ENCODE measurements at regions of chr2 and their contacts with region 1.

Region 1: GRCh38 chr2:28870146-28870891 is at the start of gene TRMT61B:
- DNase-seq: peak; percentile 97
- H3K4me3 Mint-ChIP-seq: peak within 1 kb of the TSS; percentile 89
- H3K27ac Mint-ChIP-seq: peak within 1 kb of the TSS; percentile 89
- H3K4me1 Mint-ChIP-seq: peaks cover 31% of the 10 kb centered on the region
- H3K27me3 Mint-ChIP-seq: no peaks in the 10 kb centered on the region
- total RNA-seq, gene TRMT61B: 13.6 to 15.5 TPM

Region 2: DNA sequence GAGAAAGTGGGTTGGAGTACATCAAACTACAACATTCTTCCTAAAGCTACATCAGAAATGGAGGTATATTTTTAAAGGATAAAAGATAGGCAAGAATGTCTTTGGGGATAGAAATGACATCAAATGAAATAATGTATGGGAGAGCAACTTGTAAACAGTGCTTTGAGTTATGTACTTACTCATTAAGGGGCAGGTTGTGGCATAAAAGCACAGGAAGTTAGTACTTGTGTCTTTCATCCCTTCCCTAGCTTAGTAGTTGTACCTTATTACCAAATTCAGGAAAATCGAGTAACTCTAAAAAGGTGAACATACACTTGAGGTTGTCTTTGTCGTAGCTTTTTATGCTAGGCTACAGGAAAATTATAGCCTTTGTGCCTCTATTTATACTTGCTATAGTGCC is 89.8 kb before region 1 on chr2:
- CTCF ChIA-PET with region 1: no interaction called
- intact Hi-C with region 1: no loop called
- DNase-seq: no peak
- H3K4me3 Mint-ChIP-seq: no peak overlapping the region
- H3K27ac Mint-ChIP-seq: peak overlapping the region; percentile 59
- H3K4me1 Mint-ChIP-seq: peaks cover 26% of the 10 kb centered on the region
- H3K27me3 Mint-ChIP-seq: no peaks in the 10 kb centered on the region

Region 3: DNA sequence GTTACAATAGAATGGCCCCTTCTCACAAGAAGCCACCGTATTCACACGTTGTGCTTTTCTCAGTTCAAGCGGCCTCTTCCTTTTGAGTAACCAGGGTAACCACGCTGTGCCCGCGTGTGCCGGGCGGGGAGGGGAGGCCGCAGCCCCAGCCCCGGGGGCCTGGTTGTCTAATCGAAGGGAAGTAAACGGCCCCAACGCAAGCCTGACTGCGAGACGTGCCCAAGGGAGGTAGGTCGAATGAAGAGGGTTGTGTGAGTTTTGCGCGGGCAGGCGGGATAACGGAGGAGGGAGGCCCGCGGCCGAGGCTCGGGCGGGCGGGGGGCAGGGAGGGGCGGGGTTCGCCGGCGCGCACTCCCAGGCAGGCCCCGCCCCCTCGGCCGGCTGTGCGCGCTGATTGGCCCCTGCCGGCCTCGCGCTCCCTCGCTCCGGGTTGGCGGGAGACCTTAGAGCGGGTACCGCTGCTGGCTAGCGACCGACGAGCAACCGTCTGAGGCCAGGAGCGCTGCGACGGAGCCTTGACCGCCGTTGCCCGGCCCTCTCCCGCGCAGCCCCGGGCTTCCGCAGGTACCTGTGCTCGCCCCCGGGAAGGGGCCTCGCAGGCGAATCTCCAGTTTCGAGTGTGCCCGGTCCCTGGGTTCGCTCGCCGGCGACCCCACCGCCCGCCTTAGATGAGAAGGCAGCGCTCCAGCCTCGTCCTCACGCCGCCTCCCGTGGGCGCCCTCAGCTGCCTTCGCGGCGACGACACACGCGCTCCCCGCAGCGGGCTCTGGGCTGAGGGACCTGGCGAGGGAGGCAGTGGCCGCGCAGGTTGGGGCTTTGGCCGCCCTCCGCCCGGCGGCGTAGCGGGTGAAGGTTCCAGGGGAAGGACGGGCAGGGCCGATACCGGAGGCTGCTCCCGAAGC is 59.7 kb before region 1 on chr2 and contains the start of gene SPDYA:
- CTCF ChIA-PET with region 1: no interaction called
- intact Hi-C with region 1: loop called (anchors 1 kb)
- DNase-seq: peak; percentile 82
- H3K4me3 Mint-ChIP-seq: peak within 1 kb of the TSS; percentile 75
- H3K27ac Mint-ChIP-seq: no peak within 1 kb of the TSS
- H3K4me1 Mint-ChIP-seq: peaks cover 11% of the 10 kb centered on the region
- H3K27me3 Mint-ChIP-seq: no peaks in the 10 kb centered on the region
- total RNA-seq, gene SPDYA: 1.8 to 2.0 TPM

Region 4: DNA sequence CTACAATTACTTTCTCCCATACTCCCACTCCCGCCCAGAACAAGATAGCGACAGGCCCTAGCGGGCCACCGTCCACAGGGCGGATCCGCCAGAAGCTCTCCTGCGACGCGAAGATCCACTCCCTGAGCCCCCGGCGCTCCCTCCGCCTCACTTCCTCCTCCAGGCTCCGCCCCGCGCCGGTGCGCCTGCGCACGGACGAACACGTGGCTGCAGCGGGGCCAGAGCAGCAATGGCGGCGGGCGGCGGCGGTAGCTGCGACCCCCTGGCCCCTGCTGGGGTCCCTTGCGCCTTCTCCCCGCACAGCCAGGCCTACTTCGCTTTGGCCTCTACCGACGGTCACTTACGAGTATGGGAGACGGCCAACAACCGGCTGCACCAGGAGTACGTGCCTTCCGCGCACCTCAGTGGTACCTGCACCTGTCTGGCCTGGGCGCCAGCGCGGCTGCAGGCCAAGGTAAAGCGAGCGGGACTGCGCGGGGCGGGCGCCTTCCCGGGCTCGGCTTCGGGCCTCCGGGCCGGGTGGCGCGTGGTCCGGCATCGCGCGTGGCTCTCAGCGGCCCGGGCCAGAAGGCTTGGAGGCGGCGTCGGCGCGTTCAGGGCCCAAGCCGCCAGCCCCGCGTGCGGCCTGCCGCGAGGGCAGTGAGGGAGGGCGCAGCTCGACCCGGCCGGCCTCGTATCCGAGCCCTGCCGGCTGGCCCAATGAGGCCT is 24.3 kb after region 1 on chr2 and contains the start of gene WDR43:
- CTCF ChIA-PET with region 1: interaction called, 6 read pairs
- intact Hi-C with region 1: loop called (anchors 1 kb)
- DNase-seq: peak; percentile 97
- H3K4me3 Mint-ChIP-seq: peak within 1 kb of the TSS; percentile 100
- H3K27ac Mint-ChIP-seq: peak within 1 kb of the TSS; percentile 97
- H3K4me1 Mint-ChIP-seq: peaks cover 34% of the 10 kb centered on the region
- H3K27me3 Mint-ChIP-seq: no peaks in the 10 kb centered on the region
- total RNA-seq, gene WDR43: 76.5 to 78.7 TPM

Region 5: DNA sequence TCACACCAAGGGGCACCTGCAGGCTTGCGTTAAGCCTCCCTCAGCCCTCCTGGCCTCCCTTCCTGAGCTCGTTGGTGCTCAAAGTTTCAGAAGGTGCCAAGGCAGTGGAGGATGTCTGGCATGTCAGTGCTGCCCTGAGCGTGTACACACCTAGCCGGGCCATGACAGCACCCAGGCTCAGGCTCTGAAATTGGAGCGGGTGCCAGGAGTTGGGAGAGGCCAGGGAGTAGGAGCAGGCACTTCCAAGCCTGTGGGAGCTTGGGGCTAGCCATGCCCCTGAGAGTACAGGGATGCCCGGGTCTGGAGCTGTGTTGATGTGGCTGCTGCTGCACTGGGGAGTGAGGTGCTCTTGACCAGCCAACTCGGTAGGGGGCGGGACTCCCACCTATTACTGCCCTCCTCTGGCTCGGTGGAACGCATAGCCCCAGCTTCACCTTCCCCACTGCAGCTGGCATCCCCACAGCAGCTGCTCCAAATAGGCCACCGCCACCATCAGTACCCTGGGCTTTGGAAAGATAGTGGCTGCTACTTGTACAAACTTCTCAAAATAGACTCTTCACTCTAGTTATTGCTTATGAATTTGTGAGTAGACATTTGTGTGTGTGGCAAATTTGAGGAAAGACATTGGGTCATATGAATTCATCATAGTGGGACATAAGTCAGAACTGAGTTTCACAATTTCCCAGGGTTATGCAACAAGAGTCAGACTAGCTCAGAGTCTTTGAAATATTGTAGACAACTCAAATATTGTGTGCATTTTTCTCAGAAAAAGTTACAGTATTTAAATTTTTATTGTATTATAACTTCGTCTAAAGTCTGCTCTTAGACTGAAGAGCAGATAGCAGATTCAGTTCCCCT is 210.8 kb after region 1 on chr2:
- CTCF ChIA-PET with region 1: no interaction called
- intact Hi-C with region 1: no loop called
- DNase-seq: no peak
- H3K4me3 Mint-ChIP-seq: no peak overlapping the region
- H3K27ac Mint-ChIP-seq: no peak overlapping the region
- H3K4me1 Mint-ChIP-seq: no peaks in the 10 kb centered on the region
- H3K27me3 Mint-ChIP-seq: no peaks in the 10 kb centered on the region